CD4-positive, alpha-beta memory T cell (primary cell): ENCODE measurements at regions of chr11 and their contacts with region 1.

Region 1: DNA sequence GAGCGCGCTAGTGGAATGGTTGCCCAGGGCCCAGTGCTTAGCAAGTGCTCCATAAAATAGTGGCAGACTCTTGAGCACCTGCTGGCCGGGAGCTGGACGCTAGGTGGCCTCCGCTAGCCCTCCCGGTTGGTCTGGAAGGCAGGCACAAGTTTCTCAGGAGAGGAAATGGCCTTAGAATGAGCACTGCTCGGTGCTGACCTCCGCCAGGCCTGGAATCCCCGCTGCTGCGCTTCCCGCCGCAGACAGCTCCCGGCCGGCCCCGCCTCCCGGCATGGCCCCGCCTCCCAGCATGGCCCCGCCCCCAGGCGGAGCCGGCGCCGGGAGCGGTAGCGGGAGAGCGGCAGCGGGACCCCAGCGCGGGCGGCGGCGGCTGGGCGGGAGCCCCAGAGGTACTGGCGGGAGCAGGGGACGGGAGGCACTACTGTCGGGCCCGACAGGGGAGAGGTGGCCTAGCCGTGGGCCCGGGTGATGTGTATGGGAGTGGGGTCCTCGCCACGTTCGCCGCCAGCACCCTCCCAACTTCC is at the start of gene SIPA1:
- DNase-seq: peak; percentile 63 to 85 (median 74)
- H3K4me3 ChIP-seq: peak within 1 kb of the TSS; percentile 72 to 86
- H3K4me3 Mint-ChIP-seq: peak within 1 kb of the TSS; percentile 90 to 98 (median 96)
- H3K27ac ChIP-seq: peak within 1 kb of the TSS; percentile 94
- H3K27ac Mint-ChIP-seq: peak within 1 kb of the TSS; percentile 97 to 100 (median 99)
- H3K4me1 ChIP-seq: peaks cover 71% of the 10 kb centered on the region
- H3K4me1 Mint-ChIP-seq: peaks cover 24 to 68% (median 46%) of the 10 kb centered on the region in 4 donors
- H3K27me3 ChIP-seq: no peaks in the 10 kb centered on the region
- H3K27me3 Mint-ChIP-seq: no peaks in the 10 kb centered on the region
- total RNA-seq, gene SIPA1: 150 to 169 TPM

Region 2: DNA sequence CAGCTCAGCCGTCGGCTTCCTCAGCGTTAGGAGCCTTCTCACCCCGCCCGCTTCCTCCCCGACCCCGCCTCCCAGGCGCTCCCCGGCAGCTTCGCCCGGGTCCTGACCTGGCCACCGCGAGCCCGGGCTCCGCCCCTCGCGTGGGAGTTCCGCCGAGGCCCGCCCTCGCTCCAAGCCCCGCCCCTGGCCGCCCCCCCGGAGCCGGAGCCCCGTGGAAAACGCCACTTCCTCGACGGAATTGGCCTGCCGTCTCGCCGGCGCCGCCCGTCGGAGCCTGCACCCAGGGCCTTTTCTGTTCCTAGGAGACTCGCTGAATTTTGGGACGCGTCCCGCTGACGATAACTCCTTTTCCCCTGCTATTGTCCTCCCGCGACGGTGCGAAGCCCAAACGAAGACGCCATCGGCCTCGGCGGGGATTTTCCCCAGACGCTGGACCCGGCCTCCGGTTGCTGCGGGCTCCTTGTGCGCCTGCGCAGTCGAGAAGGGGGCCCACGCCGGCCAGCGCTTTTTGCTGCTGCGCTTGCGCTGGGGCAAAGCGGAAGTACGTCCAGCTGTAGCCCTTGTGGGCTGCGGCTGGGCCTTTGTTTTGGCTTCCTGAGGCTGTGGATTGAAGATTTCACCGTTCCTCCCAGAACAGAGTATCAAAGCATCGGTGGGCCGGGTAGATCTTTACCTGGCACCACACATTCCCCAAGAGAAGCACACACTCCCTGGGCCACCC is 14.8 kb after region 1 on chr11:
- CTCF ChIA-PET with region 1: interaction called, 11 read pairs
- POLR2A ChIA-PET with region 1: interaction called, 359 read pairs
- intact Hi-C with region 1: loop called (anchors 1 kb)
- DNase-seq: peak; percentile 95 to 99 (median 97)
- H3K4me3 ChIP-seq: peak overlapping the region; percentile 50 to 64
- H3K4me3 Mint-ChIP-seq: peak overlapping the region; percentile 88 to 95 (median 91)
- H3K27ac ChIP-seq: peak overlapping the region; percentile 91
- H3K27ac Mint-ChIP-seq: peak overlapping the region; percentile 96 to 99 (median 98)
- H3K4me1 ChIP-seq: peaks cover 35% of the 10 kb centered on the region
- H3K4me1 Mint-ChIP-seq: peaks cover 34 to 59% (median 48%) of the 10 kb centered on the region in 4 donors
- H3K27me3 ChIP-seq: no peaks in the 10 kb centered on the region
- H3K27me3 Mint-ChIP-seq: no peaks in the 10 kb centered on the region

Region 3: DNA sequence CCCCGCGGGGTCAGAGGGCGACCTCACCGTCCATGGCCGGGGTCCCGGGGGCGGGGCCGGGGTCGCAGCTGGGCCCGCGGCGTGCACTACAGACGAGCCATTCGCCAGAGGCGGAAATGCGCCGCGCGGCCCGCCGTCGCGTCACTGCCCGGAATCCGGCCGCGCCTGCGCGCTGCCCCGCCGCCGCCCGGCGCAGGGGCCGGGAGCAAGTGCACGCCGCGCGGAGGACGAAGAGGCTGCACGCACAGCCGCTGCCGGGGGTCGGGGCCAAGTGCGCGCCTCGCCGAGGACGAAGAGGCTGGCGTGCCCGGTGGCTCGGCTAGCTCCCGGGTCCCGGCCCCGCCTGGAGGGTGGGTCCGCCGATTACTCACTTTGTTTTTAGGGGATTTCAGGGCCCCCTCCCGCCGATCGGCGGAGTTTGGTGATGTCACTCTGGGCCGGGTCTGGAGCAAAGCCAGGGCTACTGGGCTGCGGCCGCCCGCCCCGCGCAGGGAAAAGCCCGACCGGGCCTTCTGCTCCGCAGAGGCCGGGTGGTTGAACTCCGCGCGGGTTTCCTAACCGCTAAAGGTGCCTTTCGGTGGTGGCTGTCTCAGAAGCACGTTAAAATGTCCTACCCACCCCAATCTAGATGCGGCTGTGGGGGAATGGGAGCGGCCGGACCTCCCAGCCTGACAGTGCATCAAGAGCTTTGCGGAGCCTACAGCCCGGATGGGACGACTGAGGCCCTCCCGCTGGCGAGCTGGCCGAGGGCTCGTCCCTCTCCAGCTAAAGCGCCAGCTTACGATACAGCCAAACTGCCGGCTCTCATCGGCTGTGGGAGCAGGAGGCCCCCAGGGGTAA is 25.2 kb after region 1 on chr11 and contains the start of gene RELA:
- CTCF ChIA-PET with region 1: interaction called, 7 read pairs
- POLR2A ChIA-PET with region 1: interaction called, 359 read pairs
- intact Hi-C with region 1: loop called (anchors 1 kb)
- DNase-seq: peak; percentile 87 to 95 (median 91)
- H3K4me3 ChIP-seq: peak within 1 kb of the TSS; percentile 96 to 97
- H3K4me3 Mint-ChIP-seq: peak within 1 kb of the TSS; percentile 89 to 95 (median 90)
- H3K27ac ChIP-seq: peak within 1 kb of the TSS; percentile 98
- H3K27ac Mint-ChIP-seq: peak within 1 kb of the TSS; percentile 96 to 98 (median 96)
- H3K4me1 ChIP-seq: peaks cover 38% of the 10 kb centered on the region
- H3K4me1 Mint-ChIP-seq: peaks cover 20 to 45% (median 33%) of the 10 kb centered on the region in 4 donors
- H3K27me3 ChIP-seq: no peaks in the 10 kb centered on the region
- H3K27me3 Mint-ChIP-seq: no peaks in the 10 kb centered on the region
- total RNA-seq, gene RELA: 170 to 173 TPM